Right ventricle myocardium inferior (tissue), 1 donor: ENCODE measurements at regions of chr16 and their contacts with region 1.

Region 1: DNA sequence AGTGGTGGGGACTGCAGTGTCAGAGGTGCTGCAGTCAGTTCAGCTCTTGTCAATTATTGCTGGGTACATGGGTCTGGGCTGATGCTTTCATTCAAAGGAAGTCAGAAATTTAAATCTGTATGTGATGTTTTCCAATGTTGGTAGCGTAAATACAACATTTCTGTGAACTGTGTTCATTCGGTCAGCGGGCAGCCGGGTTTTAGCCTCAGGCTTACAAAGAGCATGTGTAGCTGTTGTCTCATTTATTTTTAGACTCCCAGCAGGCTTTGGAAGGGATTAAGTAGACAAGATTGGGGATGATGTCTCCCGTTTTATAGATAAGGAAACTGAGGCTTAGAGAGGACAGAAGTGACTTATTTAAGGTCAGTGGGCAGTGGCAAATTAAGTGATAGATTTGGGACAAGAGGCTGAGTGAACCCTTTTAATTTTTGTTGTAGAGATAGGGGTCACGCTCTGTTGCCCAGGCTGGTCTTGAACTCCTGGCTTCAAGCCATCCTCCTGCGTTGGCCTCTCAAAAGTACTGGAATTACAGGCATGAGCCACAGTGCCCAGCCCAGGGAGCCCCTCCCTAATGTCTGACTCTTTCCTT is 8.1 kb downstream of the AQP8 start:
- DNase-seq: no peak
- ATAC-seq: no peak

Region 2: GRCh38 chr16:24906199-24907020 is 318.4 kb before region 1 on chr16:
- intact Hi-C with region 1: loop called (anchors 10 kb)
- DNase-seq: no peak
- ATAC-seq: no peak

Region 3: DNA sequence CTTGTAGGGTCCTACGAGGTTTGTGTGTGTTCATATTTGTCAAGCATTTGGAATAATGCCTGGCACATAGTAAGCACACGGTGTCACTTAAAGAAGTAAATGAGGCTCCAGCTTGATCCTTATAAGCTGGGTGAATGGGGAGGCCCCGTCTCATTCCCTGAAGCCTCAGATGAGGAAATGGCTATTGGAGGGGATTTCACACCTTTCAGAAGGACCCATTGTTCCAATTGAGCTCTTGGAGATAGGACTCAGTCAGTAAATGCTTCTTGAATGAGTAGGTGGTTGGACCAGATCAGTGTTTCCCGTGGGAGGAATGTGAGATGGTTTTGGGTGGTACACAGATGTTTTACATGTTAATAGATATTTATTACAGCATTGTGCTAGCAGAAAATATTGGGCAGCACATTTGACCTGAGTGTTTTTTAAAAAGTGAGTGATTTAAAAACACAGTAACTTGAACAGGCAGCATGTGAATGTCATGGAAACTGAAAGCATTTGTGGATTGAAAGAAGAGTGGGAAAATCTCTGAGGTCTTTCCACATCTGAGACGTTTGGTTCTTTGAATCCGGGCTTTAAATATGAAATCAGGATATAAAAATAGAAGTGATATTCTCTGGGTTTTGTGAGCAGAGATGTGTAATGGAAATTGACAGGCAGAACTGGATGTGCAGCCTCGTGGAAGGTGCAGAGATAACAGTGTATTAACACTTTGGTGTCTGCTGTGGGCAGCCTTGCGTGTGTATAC is 173.2 kb before region 1 on chr16:
- intact Hi-C with region 1: loop called (anchors 1 kb)
- DNase-seq: no peak
- ATAC-seq: peak; percentile 51

Region 4: GRCh38 chr16:25126820-25127232 is 98.0 kb before region 1 on chr16:
- intact Hi-C with region 1: loop called (anchors 2 kb)
- DNase-seq: no peak
- ATAC-seq: no peak

Region 5: GRCh38 chr16:25140464-25140863 is 84.4 kb before region 1 on chr16:
- intact Hi-C with region 1: no loop called
- DNase-seq: no peak
- ATAC-seq: no peak